ENCODE measurements at regions of chr4 and their contacts with region 1.

Region 1: GRCh38 chr4:38179690-38180377 is 219.6 kb downstream of the PTTG2 start:
- DNase-seq: peak; percentile 86
- H3K4me3 Mint-ChIP-seq: no peak overlapping the region
- H3K27ac Mint-ChIP-seq: no peak overlapping the region
- H3K4me1 Mint-ChIP-seq: peaks cover 33% of the 10 kb centered on the region
- H3K27me3 Mint-ChIP-seq: no peaks in the 10 kb centered on the region

Region 2: DNA sequence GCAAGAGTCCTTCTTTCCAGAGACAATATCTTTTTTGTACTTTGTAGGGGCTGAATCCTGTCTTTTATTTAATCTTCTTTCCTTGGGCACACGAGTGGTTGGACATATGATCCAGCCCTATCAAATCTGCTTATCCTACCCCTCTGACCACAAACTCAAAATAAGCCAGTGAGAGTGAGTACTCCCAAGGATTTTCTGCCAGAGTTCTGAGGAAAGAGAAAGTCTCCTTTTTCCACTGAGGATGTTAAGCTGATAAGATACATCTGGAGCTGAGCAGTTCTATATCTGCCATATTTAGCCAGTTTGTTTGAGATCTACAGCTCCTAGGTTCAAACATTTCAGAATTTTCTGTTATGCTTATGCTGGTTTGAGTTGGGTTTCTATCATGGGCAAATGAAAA is 1070.1 kb before region 1 on chr4:
- CTCF ChIA-PET with region 1: no interaction called
- intact Hi-C with region 1: no loop called
- DNase-seq: no peak
- H3K4me3 Mint-ChIP-seq: no peak overlapping the region
- H3K27ac Mint-ChIP-seq: no peak overlapping the region
- H3K4me1 Mint-ChIP-seq: no peaks in the 10 kb centered on the region
- H3K27me3 Mint-ChIP-seq: no peaks in the 10 kb centered on the region

Region 3: DNA sequence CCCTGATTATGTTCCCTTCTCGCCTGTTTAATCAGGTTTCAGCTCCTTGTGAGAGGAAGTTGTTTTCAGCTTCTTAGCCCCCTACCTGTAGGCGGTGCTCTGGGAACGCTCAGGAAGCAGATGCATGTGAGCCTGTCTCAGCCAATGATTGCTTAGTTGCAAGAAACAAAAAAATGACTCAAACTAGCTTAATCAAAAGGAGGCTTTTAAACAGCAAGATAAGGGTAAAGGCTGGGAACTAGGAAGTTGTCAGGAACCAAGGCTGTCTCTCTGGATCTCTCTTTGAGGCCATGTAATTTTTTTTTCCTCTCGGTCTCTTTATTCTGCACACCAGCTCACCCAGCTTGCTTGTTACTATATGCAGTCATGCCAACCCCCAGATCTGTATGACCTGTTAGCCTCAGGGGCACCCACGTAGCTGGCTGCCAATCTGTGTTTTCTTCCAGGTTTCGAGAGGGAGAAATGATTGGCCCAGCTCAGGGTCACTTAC is 110.5 kb before region 1 on chr4:
- CTCF ChIA-PET with region 1: interaction called, 40 read pairs
- intact Hi-C with region 1: loop called (anchors 1 kb)
- DNase-seq: peak; percentile 80
- H3K4me3 Mint-ChIP-seq: no peak overlapping the region
- H3K27ac Mint-ChIP-seq: no peak overlapping the region
- H3K4me1 Mint-ChIP-seq: peaks cover 17% of the 10 kb centered on the region
- H3K27me3 Mint-ChIP-seq: no peaks in the 10 kb centered on the region

Region 4: GRCh38 chr4:38145741-38146140 is 34.1 kb before region 1 on chr4:
- CTCF ChIA-PET with region 1: no interaction called
- intact Hi-C with region 1: no loop called
- DNase-seq: no peak
- H3K4me3 Mint-ChIP-seq: no peak overlapping the region
- H3K27ac Mint-ChIP-seq: no peak overlapping the region
- H3K4me1 Mint-ChIP-seq: peaks cover 2% of the 10 kb centered on the region
- H3K27me3 Mint-ChIP-seq: no peaks in the 10 kb centered on the region

Region 5: GRCh38 chr4:38204339-38205035 is 24.7 kb after region 1 on chr4:
- CTCF ChIA-PET with region 1: no interaction called
- intact Hi-C with region 1: no loop called
- DNase-seq: no peak
- H3K4me3 Mint-ChIP-seq: no peak overlapping the region
- H3K27ac Mint-ChIP-seq: no peak overlapping the region
- H3K4me1 Mint-ChIP-seq: peaks cover 3% of the 10 kb centered on the region
- H3K27me3 Mint-ChIP-seq: no peaks in the 10 kb centered on the region

Region 6: DNA sequence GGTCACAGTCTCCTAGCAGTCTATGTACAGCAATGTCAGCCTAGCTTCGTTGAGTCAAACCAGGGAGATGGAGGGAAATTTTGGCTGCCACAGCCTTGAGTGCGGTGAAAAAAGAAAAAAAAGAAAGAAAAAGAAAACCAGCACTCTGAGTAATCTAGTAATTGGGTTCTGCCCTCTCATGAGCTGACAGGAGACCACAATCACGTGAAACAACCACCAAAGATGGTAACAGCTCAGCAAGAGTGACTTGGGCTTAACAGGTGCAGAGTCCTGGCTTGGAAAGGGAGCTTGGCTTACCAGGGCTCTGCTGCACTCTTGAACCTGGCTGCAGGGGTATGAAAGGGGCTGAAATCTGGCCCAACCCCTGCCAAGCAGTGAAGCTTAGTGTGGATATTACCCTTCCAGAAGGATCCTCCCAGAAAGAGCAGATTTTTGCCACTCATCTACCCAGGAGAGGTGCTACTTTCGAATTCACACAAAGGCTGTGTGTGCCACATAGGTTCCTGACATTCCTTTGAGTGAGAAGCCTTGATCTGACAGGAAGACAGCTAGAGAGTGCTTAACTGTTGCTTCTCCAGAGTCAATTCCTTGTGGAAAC is 130.7 kb after region 1 on chr4:
- CTCF ChIA-PET with region 1: interaction called, 4 read pairs
- intact Hi-C with region 1: loop called (anchors 1 kb)
- DNase-seq: peak; percentile 89
- H3K4me3 Mint-ChIP-seq: peak overlapping the region; percentile 10
- H3K27ac Mint-ChIP-seq: peak overlapping the region; percentile 72
- H3K4me1 Mint-ChIP-seq: peaks cover 65% of the 10 kb centered on the region
- H3K27me3 Mint-ChIP-seq: peaks cover 2% of the 10 kb centered on the region

Region 7: GRCh38 chr4:38514465-38515146 is 334.8 kb after region 1 on chr4:
- CTCF ChIA-PET with region 1: interaction called, 4 read pairs
- intact Hi-C with region 1: loop called (anchors 5 kb)
- DNase-seq: peak; percentile 59
- H3K4me3 Mint-ChIP-seq: no peak overlapping the region
- H3K27ac Mint-ChIP-seq: peak overlapping the region; percentile 18
- H3K4me1 Mint-ChIP-seq: peaks cover 73% of the 10 kb centered on the region
- H3K27me3 Mint-ChIP-seq: no peaks in the 10 kb centered on the region

Region 8: GRCh38 chr4:38723726-38724474 is 544.1 kb after region 1 on chr4:
- CTCF ChIA-PET with region 1: interaction called, 90 read pairs
- intact Hi-C with region 1: no loop called
- DNase-seq: no peak
- H3K4me3 Mint-ChIP-seq: no peak overlapping the region
- H3K27ac Mint-ChIP-seq: no peak overlapping the region
- H3K4me1 Mint-ChIP-seq: peaks cover 14% of the 10 kb centered on the region
- H3K27me3 Mint-ChIP-seq: no peaks in the 10 kb centered on the region

Region 9: DNA sequence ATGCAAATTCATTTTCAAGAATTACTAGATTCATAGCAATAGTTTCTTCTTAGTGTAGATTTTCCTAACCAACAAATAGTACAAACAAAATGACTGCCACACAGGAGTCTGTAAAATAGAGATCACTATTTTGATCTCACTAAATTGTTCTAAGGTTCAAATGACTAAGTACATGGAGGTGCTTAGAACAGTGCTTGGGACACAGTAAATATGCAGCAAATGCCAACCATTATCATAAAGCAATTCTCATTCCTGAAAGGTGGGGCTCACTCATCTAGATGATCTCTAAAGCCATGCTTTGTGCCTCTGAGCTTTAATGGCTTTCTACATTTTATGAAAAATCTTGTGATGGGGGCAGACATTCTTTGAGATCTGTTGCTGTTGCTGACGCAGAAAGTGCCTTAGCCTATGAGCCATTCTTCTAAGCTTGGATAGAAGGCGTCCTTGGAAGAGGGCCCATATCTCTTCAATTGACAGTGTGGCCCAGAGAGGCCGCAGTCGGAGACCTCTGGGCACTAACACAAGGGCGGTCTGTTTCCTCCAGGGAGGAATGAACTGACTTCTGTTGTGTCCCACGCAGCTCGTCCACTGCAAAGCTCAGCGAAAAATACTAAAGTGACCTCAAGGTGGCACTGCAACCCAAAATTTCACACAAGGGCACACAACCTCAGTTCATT is 579.4 kb after region 1 on chr4:
- CTCF ChIA-PET with region 1: interaction called, 14 read pairs
- intact Hi-C with region 1: no loop called
- DNase-seq: peak; percentile 82
- H3K4me3 Mint-ChIP-seq: no peak overlapping the region
- H3K27ac Mint-ChIP-seq: no peak overlapping the region
- H3K4me1 Mint-ChIP-seq: peaks cover 18% of the 10 kb centered on the region
- H3K27me3 Mint-ChIP-seq: no peaks in the 10 kb centered on the region

Measured in activated naive CD4-positive, alpha-beta T cell treated with anti-CD3 and anti-CD28 coated beads for 36 hours (primary cell).